ENCODE measurements at regions of chr2 and their contacts with region 1.

Region 1: DNA sequence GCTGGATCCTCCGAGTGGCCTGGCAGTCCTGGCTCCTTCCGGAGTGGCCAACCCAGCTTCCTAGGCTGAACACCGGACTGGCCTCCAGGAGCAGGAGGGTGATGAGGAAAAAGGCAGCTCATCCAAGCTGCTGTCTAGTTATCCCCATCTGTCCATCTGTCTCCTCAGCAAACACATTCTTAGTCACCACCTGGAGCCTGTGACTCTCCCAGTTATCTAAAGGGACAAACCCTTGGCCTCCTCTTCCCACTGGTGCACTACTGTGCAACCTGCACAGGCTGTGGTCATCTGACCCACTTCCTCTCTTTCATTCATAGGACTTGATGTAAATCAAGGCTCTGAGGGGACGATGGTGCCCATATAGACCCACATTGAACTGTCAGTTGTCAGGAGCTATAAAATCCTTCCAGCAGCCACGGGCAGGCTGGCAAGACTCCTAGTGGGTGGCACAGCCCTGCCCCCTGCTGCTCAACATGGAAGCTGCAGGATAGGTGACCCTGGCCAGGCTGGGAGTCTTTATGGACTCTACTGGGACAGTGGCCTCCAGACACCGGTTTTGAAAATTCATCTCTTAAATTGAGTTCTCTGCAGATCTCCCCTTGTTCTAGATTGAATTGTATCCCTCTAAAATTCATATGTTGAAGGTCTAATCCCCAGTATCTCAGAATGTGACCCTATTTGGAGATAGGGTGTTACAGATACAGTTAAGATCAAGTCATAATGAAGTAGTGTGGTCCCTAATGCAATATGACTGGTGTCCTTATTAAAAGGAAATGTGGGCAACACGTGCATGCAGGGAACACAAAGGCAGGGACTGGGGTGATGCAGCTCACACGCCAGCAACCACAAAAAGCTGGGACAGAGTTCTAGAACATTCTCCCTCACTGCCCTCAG is 29.3 kb upstream of the DUSP2 start:
- DNase-seq: no peak
- ATAC-seq: peak; percentile 97
- H3K4me3 ChIP-seq: no peak overlapping the region
- H3K27ac ChIP-seq: no peak overlapping the region
- H3K4me1 ChIP-seq: peaks cover 6% of the 10 kb centered on the region; the same call in 1 of the 2 replicates
- H3K27me3 ChIP-seq: no peaks in the 10 kb centered on the region
- CTCF ChIP-seq: peak; percentile 94 to 97 (median 96)
- EP300 ChIP-seq: no peak; a peak in 1 of 4 replicates
- POLR2A ChIP-seq: no peak
- RAD21 ChIP-seq: peak; percentile 100

Region 2: GRCh38 chr2:95760806-95761530 is 413.5 kb before region 1 on chr2:
- CTCF ChIA-PET with region 1: no interaction called
- POLR2A ChIA-PET with region 1: no interaction called
- RAD21 ChIA-PET with region 1: no interaction called
- SMC1A ChIA-PET with region 1: no interaction called
- in situ Hi-C with region 1: no loop called
- intact Hi-C with region 1: no loop called
- DNase-seq: no peak
- ATAC-seq: no peak
- H3K4me3 ChIP-seq: no peak overlapping the region
- H3K27ac ChIP-seq: no peak overlapping the region
- H3K4me1 ChIP-seq: no peaks in the 10 kb centered on the region
- H3K27me3 ChIP-seq: peaks cover 0 to 1% of the 10 kb centered on the region in 2 experiments; a peak in 1 of 4 replicates
- CTCF ChIP-seq: no peak
- EP300 ChIP-seq: no peak
- POLR2A ChIP-seq: no peak
- RAD21 ChIP-seq: no peak

Region 3: GRCh38 chr2:96116879-96117697 is 57.4 kb before region 1 on chr2:
- CTCF ChIA-PET with region 1: interaction called, 33 read pairs
- POLR2A ChIA-PET with region 1: no interaction called
- RAD21 ChIA-PET with region 1: interaction called, 21 read pairs
- SMC1A ChIA-PET with region 1: interaction called, 12 read pairs
- in situ Hi-C with region 1: no loop called
- intact Hi-C with region 1: no loop called
- DNase-seq: no peak
- ATAC-seq: peak; percentile 91
- H3K4me3 ChIP-seq: peak overlapping the region; percentile 62
- H3K27ac ChIP-seq: no peak overlapping the region
- H3K4me1 ChIP-seq: peaks cover 10% of the 10 kb centered on the region
- H3K27me3 ChIP-seq: peaks cover 0 to 1% of the 10 kb centered on the region in 2 experiments; a peak in 2 of 4 replicates
- CTCF ChIP-seq: peak; percentile 60 to 88 (median 79); a peak in 5 of 6 replicates
- EP300 ChIP-seq: no peak
- POLR2A ChIP-seq: no peak
- RAD21 ChIP-seq: peak; percentile 76

Region 4: GRCh38 chr2:96138179-96139145 is 36.0 kb before region 1 on chr2 and contains the start of gene ASTL:
- CTCF ChIA-PET with region 1: interaction called, 535 read pairs
- POLR2A ChIA-PET with region 1: interaction called, 35 read pairs
- RAD21 ChIA-PET with region 1: interaction called, 463 read pairs
- SMC1A ChIA-PET with region 1: interaction called, 338 read pairs
- in situ Hi-C with region 1: loop called (anchors 5 kb)
- intact Hi-C with region 1: loop called (anchors 1 kb)
- DNase-seq: no peak
- ATAC-seq: peak; percentile 37
- H3K4me3 ChIP-seq: no peak within 1 kb of the TSS
- H3K27ac ChIP-seq: no peak within 1 kb of the TSS
- H3K4me1 ChIP-seq: peaks cover 13% of the 10 kb centered on the region
- H3K27me3 ChIP-seq: no peaks in the 10 kb centered on the region; a peak in 1 of 4 replicates
- CTCF ChIP-seq: peak; percentile 67 to 92 (median 71)
- EP300 ChIP-seq: no peak
- POLR2A ChIP-seq: no peak
- RAD21 ChIP-seq: peak; percentile 92
- polyA plus RNA-seq, gene ASTL: not detected

Region 5: DNA sequence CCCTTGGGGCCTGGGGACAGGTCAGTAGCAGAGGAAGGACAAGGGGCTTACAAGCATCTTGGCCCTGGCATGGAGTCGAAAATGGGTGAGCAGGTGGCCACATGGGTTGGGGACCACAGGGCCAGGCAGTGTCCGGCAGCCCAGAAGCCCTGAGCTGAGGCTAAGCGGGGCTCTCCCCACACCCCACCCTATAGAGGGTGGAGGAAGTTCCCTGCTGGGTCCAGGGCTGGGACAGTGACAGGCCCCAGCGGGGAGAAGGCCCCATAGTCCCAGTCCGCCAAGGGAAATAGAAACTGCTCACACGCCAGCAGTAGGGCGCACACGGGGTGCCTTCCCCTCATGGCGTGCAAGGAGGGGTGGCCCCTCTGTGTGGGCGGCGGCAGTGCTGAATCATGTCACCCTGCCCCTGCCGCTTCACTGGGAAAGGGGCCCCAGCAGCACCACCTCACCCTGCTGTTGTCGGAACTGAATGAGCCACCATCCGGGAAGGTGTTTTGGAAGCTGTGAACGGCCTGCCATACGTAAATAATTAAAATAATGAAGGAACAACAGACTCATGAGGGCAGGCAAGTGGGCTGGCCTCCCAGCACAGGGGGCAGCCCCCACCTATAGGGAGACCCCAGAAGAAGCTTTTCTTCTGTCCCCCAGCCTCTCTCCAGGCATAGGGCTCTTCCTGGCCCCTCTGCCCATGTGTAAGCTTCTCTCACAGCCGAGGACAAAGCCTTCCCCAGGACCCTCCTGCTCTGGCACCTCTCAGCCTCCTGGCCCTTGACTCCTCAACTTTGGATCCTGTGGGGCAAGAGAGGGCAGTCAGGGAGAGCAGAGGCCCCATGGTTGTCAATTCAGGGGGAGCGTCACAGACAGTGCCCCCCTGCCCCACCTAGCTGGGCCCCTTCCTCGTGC is 16.6 kb before region 1 on chr2:
- CTCF ChIA-PET with region 1: interaction called, 42 read pairs
- POLR2A ChIA-PET with region 1: interaction called, 26 read pairs
- RAD21 ChIA-PET with region 1: interaction called, 59 read pairs
- SMC1A ChIA-PET with region 1: interaction called, 34 read pairs
- in situ Hi-C with region 1: no loop called
- intact Hi-C with region 1: no loop called
- DNase-seq: peak; percentile 76
- ATAC-seq: peak; percentile 80
- H3K4me3 ChIP-seq: peak overlapping the region; percentile 21; the same call in 1 of the 2 replicates
- H3K27ac ChIP-seq: peak overlapping the region; percentile 95
- H3K4me1 ChIP-seq: peaks cover 60% of the 10 kb centered on the region
- H3K27me3 ChIP-seq: no peaks in the 10 kb centered on the region
- CTCF ChIP-seq: no peak
- EP300 ChIP-seq: peak; percentile 93 to 95
- POLR2A ChIP-seq: peak; percentile 80
- RAD21 ChIP-seq: peak; percentile 22; the same call in 1 of the 2 replicates

Region 6: DNA sequence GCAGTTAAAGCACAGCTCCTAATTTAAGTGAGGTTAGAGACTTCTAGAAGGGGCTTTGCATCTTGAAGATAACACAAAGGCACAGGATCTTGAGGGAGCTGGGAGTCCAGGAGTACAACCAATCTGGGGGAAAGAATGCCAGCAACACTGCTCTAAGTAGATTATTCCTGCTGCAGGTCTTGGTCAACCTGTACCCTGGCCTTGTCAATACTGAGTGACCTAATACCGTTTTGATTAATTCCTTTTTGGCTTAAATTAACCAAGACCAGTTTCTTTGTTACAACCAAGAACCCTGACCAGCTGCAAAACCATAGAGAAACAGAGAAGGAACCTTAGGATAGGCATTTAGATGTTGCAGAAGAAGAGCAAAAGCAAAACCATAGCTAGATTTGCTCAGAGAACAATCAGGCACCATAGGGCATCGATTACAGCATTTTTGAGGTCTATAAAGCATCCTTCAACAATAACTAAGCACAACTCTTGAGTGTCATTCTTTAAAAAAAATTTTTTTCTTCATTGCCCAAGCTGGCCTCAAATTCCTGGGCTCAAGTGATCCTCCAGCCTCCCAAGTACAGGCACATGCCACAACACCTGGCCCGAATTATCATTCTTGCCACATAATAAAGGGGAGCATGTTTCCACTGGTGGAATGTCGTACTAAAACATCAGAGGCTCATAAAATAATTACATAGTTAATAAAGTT is 27.8 kb after region 1 on chr2:
- CTCF ChIA-PET with region 1: interaction called, 36 read pairs
- POLR2A ChIA-PET with region 1: interaction called, 8 read pairs
- RAD21 ChIA-PET with region 1: interaction called, 32 read pairs
- SMC1A ChIA-PET with region 1: interaction called, 29 read pairs
- in situ Hi-C with region 1: no loop called
- intact Hi-C with region 1: no loop called
- DNase-seq: no peak
- ATAC-seq: peak; percentile 3; the same call in 1 of the 3 replicates
- H3K4me3 ChIP-seq: peak overlapping the region; percentile 27; the same call in 1 of the 2 replicates
- H3K27ac ChIP-seq: no peak overlapping the region
- H3K4me1 ChIP-seq: peaks cover 20% of the 10 kb centered on the region
- H3K27me3 ChIP-seq: no peaks in the 10 kb centered on the region
- CTCF ChIP-seq: no peak
- EP300 ChIP-seq: no peak
- POLR2A ChIP-seq: no peak
- RAD21 ChIP-seq: no peak

Region 7: DNA sequence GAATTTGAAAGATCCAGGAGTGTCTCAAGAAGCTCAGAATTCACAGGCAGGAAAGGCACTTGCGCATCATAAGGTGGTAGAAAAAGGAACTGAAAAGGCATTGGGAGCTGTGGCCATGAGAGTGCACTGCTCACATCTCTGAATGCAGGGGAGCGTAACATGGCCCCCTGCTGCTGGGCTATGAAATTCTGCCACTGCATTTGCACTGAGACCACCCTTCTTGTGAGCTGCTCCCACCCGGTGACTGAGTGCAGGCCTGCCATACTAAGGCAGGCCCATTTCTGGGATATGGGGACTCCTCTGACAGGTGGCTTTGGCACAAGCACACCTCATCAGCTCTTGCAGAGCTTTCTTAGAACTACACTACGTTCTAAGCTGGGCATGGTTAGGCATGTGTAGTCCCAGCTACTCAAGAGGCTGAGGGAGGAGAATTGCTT is 59.4 kb after region 1 on chr2:
- CTCF ChIA-PET with region 1: interaction called, 27 read pairs
- POLR2A ChIA-PET with region 1: interaction called, 3 read pairs
- RAD21 ChIA-PET with region 1: interaction called, 34 read pairs
- SMC1A ChIA-PET with region 1: interaction called, 34 read pairs
- in situ Hi-C with region 1: no loop called
- intact Hi-C with region 1: no loop called
- DNase-seq: peak; percentile 68
- ATAC-seq: peak; percentile 99
- H3K4me3 ChIP-seq: no peak overlapping the region
- H3K27ac ChIP-seq: peak overlapping the region; percentile 50
- H3K4me1 ChIP-seq: peaks cover 21% of the 10 kb centered on the region
- H3K27me3 ChIP-seq: no peaks in the 10 kb centered on the region
- CTCF ChIP-seq: peak; percentile 44 to 51 (median 46); a peak in 5 of 6 replicates
- EP300 ChIP-seq: peak in 1 of 2 experiments; percentile 51; a peak in 1 of 4 replicates
- POLR2A ChIP-seq: no peak
- RAD21 ChIP-seq: peak; percentile 48

Region 8: DNA sequence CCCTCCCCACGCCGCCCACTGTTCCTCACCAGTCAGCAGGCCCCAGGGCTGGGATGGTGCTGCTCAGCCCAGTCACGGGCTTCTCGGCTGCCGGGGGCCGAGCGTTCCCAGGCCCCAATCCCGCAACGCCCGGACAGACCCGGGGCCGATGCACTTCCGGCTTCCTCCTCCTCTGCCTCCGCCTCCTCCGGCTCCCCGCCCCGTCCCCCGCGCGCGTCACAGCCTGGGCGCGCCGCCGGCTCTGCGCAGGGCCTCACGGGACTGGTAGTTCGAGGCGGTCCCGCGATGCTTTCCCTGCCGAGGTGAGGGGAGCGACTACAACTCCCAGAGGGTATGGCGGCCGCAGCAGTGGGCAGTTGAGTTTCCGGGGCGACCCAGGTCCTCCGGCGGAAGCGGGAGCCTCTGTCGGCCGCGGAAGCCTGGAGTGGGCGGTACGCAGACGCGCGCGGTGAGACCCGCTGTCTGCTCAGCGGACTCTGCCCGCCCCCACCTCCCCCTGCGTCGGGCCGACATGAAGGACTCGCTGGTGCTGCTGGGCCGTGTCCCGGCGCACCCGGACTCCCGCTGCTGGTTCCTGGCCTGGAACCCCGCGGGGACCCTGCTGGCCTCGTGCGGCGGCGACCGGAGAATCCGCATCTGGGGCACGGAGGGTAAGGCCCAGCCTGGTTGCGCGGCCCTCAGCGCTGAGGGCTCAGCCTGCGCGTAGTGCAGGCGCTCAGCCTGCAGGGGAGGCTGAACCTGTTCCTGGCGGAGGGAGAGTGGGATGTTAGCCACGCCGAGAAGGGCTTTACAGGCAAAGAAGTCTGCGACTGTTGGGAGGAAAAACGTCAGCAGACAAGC is 91.6 kb after region 1 on chr2 and contains the starts of genes CIAO1 and TMEM127:
- CTCF ChIA-PET with region 1: interaction called, 20 read pairs
- POLR2A ChIA-PET with region 1: interaction called, 9 read pairs
- RAD21 ChIA-PET with region 1: interaction called, 11 read pairs
- SMC1A ChIA-PET with region 1: interaction called, 22 read pairs
- in situ Hi-C with region 1: no loop called
- intact Hi-C with region 1: no loop called
- DNase-seq: peak; percentile 90
- ATAC-seq: peak; percentile 94
- H3K4me3 ChIP-seq: peak within 1 kb of the TSS; percentile 98
- H3K27ac ChIP-seq: peak within 1 kb of the TSS; percentile 79
- H3K4me1 ChIP-seq: peaks cover 16% of the 10 kb centered on the region; the same call in 1 of the 2 replicates
- H3K27me3 ChIP-seq: no peaks in the 10 kb centered on the region
- CTCF ChIP-seq: peak; percentile 15 to 44 (median 40); a peak in 4 of 6 replicates
- EP300 ChIP-seq: peak; percentile 9 to 12; a peak in 1 of 4 replicates
- POLR2A ChIP-seq: peak; percentile 92
- RAD21 ChIP-seq: no peak
- polyA plus RNA-seq, gene CIAO1: 8.3 to 15.6 TPM
- polyA plus RNA-seq, gene TMEM127: 2.6 to 3.0 TPM